IMR-90 (cell line): ENCODE measurements at regions of chr14 and their contacts with region 1.

Region 1: GRCh38 chr14:91177073-91178034 is 63.5 kb downstream of the DGLUCY start:
- DNase-seq: peak; percentile 70
- ATAC-seq: peak; percentile 88
- H3K4me3 ChIP-seq: no peak overlapping the region
- H3K27ac ChIP-seq: no peak overlapping the region
- H3K4me1 ChIP-seq: no peaks in the 10 kb centered on the region
- H3K27me3 ChIP-seq: no peaks in the 10 kb centered on the region
- CTCF ChIP-seq: peak; percentile 83
- POLR2A ChIP-seq: no peak
- RAD21 ChIP-seq: peak; percentile 87

Region 2: DNA sequence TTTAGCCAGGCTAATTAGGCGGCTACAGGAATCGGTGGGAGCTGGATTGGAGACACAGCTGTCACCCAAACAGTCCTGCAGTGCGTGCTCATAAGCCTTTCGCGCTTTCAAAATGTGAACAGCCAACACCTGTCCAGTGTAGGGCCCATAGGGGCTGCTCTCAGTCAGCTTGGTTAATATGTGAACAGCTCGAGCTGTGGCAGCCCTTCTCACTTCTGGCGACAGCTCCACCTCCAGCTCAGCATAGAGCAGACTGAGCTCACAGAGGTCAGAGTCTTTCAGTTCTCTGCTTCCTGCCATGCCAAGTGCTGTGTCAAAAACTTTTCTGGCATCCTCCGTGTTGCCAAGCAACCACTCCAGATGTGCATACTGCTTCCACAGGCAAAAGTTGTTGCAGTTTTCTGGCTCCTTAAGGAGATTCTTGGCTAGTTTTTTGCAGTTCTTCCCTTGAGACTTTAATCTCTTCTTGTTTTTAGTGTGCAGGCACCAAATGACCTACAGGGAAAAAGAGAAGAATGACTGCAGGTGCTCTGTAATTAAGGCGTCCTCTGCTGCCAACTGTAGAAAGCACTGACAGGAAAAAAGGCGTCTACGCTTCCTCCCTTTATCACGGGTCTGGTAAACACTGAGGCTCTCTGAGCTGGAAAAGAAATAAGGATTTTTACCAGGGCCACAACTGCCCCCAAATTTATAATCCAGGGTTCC is 888.6 kb before region 1 on chr14:
- CTCF ChIA-PET with region 1: no interaction called
- POLR2A ChIA-PET with region 1: no interaction called
- dilution Hi-C with region 1: no loop called
- in situ Hi-C with region 1: loop called (anchors 25 kb)
- intact Hi-C with region 1: no loop called
- DNase-seq: peak; percentile 25
- ATAC-seq: no peak; the same call in 1 of the 2 replicates
- H3K4me3 ChIP-seq: no peak overlapping the region
- H3K27ac ChIP-seq: no peak overlapping the region
- H3K4me1 ChIP-seq: no peaks in the 10 kb centered on the region
- H3K27me3 ChIP-seq: no peaks in the 10 kb centered on the region
- CTCF ChIP-seq: no peak
- POLR2A ChIP-seq: no peak
- RAD21 ChIP-seq: no peak

Region 3: DNA sequence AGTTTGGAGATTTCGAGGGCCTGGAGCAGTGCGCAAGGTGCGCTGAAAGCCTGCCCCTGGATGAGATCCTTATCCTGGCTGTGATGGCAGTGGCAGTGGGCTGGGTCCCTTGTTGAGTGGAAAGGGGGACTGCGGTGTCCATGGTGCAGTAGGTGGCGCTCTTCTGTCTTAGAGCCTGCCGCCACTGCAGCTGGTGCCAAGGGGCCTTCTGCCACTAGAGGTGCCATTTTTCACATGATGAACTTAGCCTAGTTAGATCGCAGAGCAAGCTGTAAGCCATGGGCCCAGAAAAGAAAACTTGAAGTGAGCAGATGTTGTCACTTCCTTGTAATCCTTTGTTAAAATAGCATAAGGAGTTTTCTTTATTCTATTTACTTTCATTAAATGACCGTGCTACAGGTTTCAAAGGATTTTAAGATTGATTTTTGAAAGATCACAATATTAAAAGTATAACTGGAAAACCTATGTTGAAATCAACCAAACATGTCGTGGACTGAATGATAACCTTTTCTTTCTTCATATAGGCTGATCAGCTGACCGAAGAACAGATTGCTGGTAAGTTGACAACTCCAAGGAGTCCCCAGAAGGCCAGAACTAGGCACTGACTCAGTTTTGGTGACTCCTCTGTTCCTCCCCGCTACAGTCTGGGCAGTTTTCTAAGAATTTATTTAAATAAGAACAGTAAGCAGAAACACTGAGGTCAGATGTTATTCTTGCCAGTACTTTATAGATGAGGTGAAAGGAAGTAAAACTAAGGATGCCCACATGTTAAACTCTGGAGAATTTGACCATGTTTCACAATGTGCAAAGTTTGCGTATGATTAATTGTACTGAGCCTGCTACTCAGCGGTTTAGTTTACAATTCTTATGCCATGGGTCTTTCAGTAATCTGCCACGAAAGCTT is 777.6 kb before region 1 on chr14:
- CTCF ChIA-PET with region 1: no interaction called
- POLR2A ChIA-PET with region 1: interaction called, 4 read pairs
- dilution Hi-C with region 1: no loop called
- in situ Hi-C with region 1: loop called (anchors 25 kb)
- intact Hi-C with region 1: no loop called
- DNase-seq: peak; percentile 88
- ATAC-seq: peak; percentile 42
- H3K4me3 ChIP-seq: no peak overlapping the region
- H3K27ac ChIP-seq: no peak overlapping the region
- H3K4me1 ChIP-seq: peaks cover 4% of the 10 kb centered on the region
- H3K27me3 ChIP-seq: no peaks in the 10 kb centered on the region
- CTCF ChIP-seq: peak; percentile 100
- POLR2A ChIP-seq: no peak
- RAD21 ChIP-seq: peak; percentile 93

Region 4: GRCh38 chr14:90903101-90903500 is 274.3 kb before region 1 on chr14:
- CTCF ChIA-PET with region 1: interaction called, 82 read pairs
- POLR2A ChIA-PET with region 1: no interaction called
- dilution Hi-C with region 1: no loop called
- in situ Hi-C with region 1: loop called (anchors 5 kb)
- intact Hi-C with region 1: loop called (anchors 1 kb)
- DNase-seq: peak; percentile 53
- ATAC-seq: peak; percentile 94
- H3K4me3 ChIP-seq: no peak overlapping the region
- H3K27ac ChIP-seq: no peak overlapping the region
- H3K4me1 ChIP-seq: no peaks in the 10 kb centered on the region
- H3K27me3 ChIP-seq: no peaks in the 10 kb centered on the region
- CTCF ChIP-seq: peak; percentile 78
- POLR2A ChIP-seq: no peak
- RAD21 ChIP-seq: peak; percentile 75

Region 5: GRCh38 chr14:91138511-91139359 is 38.6 kb before region 1 on chr14:
- CTCF ChIA-PET with region 1: interaction called, 10 read pairs
- POLR2A ChIA-PET with region 1: no interaction called
- dilution Hi-C with region 1: no loop called
- in situ Hi-C with region 1: no loop called
- intact Hi-C with region 1: no loop called
- DNase-seq: no peak
- ATAC-seq: peak; percentile 45
- H3K4me3 ChIP-seq: no peak overlapping the region
- H3K27ac ChIP-seq: no peak overlapping the region
- H3K4me1 ChIP-seq: no peaks in the 10 kb centered on the region; the same call in 1 of the 2 replicates
- H3K27me3 ChIP-seq: no peaks in the 10 kb centered on the region
- CTCF ChIP-seq: peak; percentile 57
- POLR2A ChIP-seq: no peak
- RAD21 ChIP-seq: peak; percentile 40